Sigmoid colon (tissue), 7 donors: ENCODE measurements at regions of chr17 and their contacts with region 1.

Region 1: DNA sequence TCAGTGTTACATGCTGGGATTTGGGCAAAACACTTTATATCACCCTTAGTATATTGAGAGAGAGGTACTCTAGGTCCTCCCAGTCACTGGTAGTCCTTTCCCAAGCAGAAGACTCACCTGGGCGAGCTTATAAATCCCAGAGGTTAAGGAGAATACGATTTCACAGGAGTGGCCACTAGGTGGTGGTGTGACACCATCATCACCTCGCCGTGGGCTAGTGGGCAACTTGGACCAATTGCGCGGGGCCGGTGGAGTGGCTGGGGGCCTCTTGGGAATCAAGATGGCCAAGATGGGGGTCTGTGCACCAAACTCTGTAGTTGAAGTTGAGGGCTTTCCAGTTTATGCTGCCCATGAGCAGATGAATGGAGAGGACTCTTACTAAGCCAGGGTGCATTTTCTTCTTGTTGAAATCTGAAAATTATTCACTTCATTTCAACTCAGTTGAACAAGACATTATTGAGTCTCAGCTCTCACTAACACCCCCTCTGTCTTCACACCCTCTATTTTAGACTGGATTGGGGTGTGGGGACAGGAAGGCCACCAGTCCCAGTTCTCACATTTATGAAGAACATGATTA is 38.2 kb upstream of the PIRT start:
- DNase-seq: no peak
- H3K4me3 ChIP-seq: no peak overlapping the region
- H3K27ac ChIP-seq: no peak overlapping the region
- H3K4me1 ChIP-seq: no peaks in the 10 kb centered on the region
- H3K27me3 ChIP-seq: peaks cover 0 to 12% (median 0%) of the 10 kb centered on the region in 3 donors
- CTCF ChIP-seq: peak; percentile 35 to 73 (median 60)
- EP300 ChIP-seq: no peak
- POLR2A ChIP-seq: no peak

Region 2: DNA sequence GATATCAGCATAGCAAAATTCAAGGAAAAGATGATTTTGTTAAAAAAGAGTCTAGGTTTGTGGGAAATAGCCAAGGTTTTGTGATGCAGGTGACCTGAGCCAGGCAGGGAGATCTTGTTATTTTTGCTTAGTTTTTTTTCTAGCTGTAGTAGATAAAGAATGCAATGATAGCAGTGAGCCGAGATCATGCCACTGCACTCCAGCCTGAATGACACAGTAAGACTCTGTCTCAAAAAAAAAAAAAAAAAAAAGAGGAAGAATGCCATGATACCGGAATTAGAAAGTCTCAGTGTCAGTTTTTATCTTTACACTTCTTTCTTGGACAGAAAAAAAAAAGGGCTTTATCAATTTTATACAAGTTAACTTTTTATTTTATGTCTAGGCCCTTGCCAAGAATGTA is 99.7 kb before region 1 on chr17:
- intact Hi-C with region 1: no loop called
- DNase-seq: peak; percentile 5
- H3K4me3 ChIP-seq: no peak overlapping the region
- H3K27ac ChIP-seq: no peak overlapping the region
- H3K4me1 ChIP-seq: no peaks in the 10 kb centered on the region
- H3K27me3 ChIP-seq: no peaks in the 10 kb centered on the region
- CTCF ChIP-seq: no peak
- EP300 ChIP-seq: no peak
- POLR2A ChIP-seq: no peak

Region 3: GRCh38 chr17:11144358-11145233 is 268.5 kb after region 1 on chr17:
- intact Hi-C with region 1: loop called (anchors 1 kb)
- DNase-seq: no peak
- H3K4me3 ChIP-seq: no peak overlapping the region
- H3K27ac ChIP-seq: no peak overlapping the region
- H3K4me1 ChIP-seq: no peaks in the 10 kb centered on the region
- H3K27me3 ChIP-seq: no peaks in the 10 kb centered on the region
- CTCF ChIP-seq: peak in 3 of 4 experiments; percentile 38 to 49 (median 44)
- EP300 ChIP-seq: no peak
- POLR2A ChIP-seq: no peak

Region 4: DNA sequence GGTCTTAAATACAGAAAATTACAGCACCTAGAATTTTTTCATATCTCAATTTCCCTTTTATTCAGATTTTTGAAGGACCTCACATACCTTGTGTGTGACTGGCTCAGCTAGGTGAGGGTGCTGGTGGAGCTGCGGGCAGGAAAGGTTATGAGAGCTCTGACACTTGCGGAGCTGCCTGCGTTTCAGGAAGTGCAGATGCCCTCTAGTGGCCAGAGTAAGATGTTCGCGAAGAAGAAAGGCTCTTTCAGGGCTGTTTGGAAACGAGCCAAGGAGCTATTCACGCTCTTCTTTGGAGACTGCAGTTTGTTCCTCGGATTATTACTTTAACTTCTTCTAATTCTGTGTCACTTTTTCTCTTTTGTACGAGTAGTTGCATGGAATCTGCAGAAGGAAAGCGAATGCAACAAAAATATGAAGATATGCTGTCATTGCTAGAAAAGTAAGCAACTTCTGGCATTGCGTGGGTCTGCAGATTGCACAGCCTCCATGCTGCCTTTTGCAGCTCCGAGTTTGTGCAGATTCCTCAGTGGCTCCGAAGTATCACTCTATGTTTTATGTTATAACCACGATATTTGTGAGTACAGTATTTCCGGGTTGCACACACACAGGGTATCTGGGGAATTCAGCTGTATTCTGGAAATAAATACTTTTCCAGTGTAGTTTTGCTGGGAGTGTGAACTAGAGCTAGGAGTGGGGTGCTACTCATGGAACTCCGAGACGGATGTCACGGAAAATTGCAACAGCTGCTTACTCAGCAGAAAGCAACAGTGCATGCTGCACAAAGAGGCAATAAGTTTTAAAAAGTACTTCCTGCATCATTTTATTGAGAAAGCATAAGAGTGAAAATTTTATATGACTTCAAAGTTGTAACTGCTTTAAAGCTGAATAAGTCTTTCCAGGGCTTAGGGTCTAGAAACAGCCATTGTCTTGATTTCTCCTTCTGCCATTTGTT is 768.5 kb after region 1 on chr17:
- intact Hi-C with region 1: loop called (anchors 2 kb)
- DNase-seq: peak; percentile 80
- H3K4me3 ChIP-seq: no peak overlapping the region
- H3K27ac ChIP-seq: no peak overlapping the region
- H3K4me1 ChIP-seq: no peaks in the 10 kb centered on the region
- H3K27me3 ChIP-seq: no peaks in the 10 kb centered on the region
- CTCF ChIP-seq: peak; percentile 37 to 80 (median 60)
- EP300 ChIP-seq: no peak
- POLR2A ChIP-seq: no peak

Region 5: DNA sequence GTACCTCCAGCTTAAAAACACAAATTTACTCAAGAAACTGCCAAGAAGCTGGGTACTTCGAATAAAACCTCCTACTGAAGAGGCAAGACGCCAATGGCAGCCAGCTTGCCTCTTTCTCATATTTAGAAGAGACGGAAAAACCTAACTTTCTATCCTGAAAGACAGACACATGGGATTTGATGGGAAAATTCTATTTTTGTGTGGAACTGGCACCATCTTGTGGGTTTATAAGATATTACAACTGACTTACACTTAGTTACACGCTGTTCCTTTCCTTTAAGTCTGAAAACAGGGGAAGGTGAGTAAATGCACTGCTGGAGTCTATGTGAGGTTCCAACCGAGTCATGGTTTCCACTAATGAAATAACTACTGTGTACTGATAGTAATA is 1110.9 kb after region 1 on chr17:
- intact Hi-C with region 1: loop called (anchors 10 kb)
- DNase-seq: no peak
- H3K4me3 ChIP-seq: no peak overlapping the region
- H3K27ac ChIP-seq: no peak overlapping the region
- H3K4me1 ChIP-seq: no peaks in the 10 kb centered on the region
- H3K27me3 ChIP-seq: no peaks in the 10 kb centered on the region
- CTCF ChIP-seq: peak in 3 of 4 experiments; percentile 33 to 51 (median 46)
- EP300 ChIP-seq: no peak
- POLR2A ChIP-seq: no peak